Activated B cell treated with CpG ODN at 0.5 μM for 24 hours (primary cell): ENCODE measurements at regions of chr13 and their contacts with region 1.

Region 1: DNA sequence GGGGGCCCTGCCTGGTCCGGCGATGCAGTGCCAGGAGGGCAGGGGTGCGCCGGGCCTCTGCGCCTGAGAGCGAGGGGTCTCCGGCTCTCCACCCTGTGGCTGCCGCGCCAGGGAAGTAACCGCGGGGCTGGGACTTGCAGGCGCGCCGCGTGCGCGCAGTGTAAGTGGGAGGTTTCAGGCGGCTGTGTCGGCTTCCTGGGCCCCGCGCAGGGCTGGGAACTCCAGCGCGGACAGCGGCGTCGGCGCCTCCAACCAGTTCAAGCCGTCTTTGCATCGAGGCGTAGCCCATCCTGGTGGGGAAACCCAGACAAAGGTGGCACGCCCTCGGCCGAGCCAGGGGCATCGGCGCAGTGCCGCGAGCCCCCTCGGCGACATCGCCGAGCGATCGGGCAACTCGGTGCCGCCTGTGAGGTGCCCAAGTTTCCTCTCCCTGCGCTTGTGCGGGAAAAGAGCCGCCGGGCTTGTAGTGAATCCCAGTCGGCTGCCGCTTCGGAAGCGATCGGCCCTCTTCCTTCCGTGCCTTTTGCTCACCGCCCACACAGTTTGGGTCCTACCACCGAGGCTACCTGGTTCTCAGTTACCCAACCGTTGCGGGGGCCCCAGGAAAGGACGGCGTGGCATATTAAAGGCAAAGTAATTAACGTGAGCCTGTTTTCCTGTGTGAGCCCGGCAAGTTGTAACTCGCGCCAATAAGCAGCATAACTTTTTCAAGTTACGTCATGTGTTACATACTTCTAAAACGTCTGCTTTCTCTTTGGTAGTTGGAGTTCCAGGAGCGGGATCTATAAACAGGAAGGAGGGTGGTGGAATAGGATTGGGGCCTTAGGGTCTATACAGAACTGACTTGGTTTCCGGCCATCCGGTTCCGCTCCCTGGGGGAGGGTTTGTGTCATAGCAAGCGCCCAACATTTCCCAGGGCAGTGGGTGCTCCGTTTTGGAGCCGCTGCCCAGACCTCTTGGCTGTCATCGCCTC is 1.2 kb downstream of the LRCH1 start:
- DNase-seq: peak; percentile 72
- ATAC-seq: peak; percentile 57
- H3K4me3 Mint-ChIP-seq: peak overlapping the region; percentile 96
- H3K27ac Mint-ChIP-seq: peak overlapping the region; percentile 94
- H3K4me1 Mint-ChIP-seq: peaks cover 53% of the 10 kb centered on the region
- H3K27me3 Mint-ChIP-seq: no peaks in the 10 kb centered on the region
- CTCF ChIP-seq: no peak

Region 2: DNA sequence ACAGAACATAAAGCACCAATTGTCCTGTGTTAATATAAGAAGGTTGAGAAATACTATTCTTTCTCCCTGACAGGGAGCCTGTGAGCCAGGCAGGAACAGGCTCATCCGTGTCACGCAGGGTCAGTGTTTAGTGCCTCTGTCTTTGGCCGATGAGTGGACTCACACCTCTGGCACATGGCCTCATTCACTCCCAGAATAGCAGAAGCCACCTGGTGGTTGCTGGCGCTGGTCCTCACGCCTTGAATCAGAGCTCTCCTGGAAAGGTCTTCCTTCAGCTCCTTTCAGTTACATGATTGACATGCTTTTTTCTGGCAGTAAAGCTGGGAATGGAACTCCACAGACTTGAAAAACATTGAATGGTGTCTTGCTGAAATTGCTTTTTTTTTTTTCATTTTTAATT is 674.5 kb before region 1 on chr13:
- CTCF ChIA-PET with region 1: no interaction called
- POLR2A ChIA-PET with region 1: no interaction called
- intact Hi-C with region 1: no loop called
- DNase-seq: no peak
- ATAC-seq: no peak
- H3K4me3 Mint-ChIP-seq: no peak overlapping the region
- H3K27ac Mint-ChIP-seq: no peak overlapping the region
- H3K4me1 Mint-ChIP-seq: no peaks in the 10 kb centered on the region
- H3K27me3 Mint-ChIP-seq: peaks cover 5% of the 10 kb centered on the region
- CTCF ChIP-seq: no peak

Region 3: DNA sequence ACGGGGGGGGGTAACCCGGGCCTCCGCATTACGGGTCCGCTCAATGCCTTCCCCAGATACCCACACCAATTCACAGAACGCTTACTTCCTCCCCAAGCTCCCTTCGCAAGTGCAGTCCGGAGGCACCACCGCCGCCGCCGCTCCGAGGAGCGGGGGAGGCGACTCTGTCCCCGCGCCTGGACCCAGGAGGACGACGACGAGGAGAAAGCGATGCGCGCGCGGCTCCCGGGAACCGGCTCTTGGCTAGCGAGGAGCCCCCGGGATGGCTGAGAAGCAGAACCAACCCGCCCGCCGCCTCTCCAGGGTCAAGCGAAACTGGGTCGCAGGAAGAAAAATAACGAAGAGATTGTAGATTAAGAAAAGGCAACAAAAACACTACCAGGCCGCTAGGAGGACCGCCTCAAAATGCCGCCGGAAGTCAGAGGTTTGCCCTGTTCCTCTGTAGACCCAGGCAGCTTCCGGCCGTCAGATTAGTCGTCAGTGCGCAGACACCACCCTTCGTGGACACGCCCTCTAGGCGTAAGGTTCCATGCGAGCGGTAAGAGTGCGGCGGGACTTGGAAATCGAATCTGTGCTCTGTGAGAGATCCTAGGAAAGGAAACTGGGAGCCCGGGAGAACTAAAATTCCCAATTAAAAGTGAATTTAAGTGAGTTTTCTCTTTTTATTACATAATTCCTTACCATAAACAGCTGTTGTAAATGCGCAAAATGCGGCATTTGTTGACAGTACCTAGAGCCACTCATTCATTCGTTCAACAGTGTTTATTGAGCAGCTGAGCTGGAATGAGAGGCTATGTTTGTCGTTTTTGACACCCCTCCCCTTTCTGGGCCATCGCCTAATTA is 501.6 kb before region 1 on chr13 and contains the start of gene ZC3H13:
- CTCF ChIA-PET with region 1: no interaction called
- POLR2A ChIA-PET with region 1: no interaction called
- intact Hi-C with region 1: loop called (anchors 1 kb)
- DNase-seq: peak; percentile 76
- ATAC-seq: peak; percentile 99
- H3K4me3 Mint-ChIP-seq: peak within 1 kb of the TSS; percentile 95
- H3K27ac Mint-ChIP-seq: peak within 1 kb of the TSS; percentile 96
- H3K4me1 Mint-ChIP-seq: peaks cover 39% of the 10 kb centered on the region
- H3K27me3 Mint-ChIP-seq: peaks cover 1% of the 10 kb centered on the region
- CTCF ChIP-seq: no peak
- total RNA-seq, gene ZC3H13: 48.1 and 48.7 TPM in 2 replicates

Region 4: DNA sequence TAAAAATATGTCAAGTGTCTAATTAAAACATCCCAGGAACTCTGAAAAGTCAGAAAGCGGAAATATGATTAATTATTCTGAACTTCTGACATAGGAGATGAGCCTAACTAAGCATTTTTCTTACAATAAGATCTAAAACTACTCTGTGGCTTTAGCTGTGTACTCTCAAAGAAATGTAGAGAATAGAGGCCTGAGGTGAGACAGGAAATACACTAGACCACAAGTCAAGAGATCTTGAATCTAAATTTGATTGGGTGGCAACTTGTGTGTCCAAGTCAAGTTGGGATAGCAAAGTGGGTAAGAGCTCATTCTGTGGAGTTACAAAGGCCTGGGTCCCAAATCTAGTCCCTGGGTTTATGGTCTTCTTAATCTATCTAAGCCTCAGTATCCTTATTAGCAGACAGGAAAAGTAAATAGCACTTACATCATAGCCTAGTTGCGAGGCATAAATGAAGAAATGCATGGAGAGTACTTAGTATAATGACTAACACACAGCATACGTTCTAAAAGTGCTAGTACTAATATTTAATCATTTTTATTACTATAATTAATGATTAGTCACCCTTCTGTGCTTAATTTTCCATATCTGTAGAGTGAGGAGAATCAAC is 351.9 kb before region 1 on chr13:
- CTCF ChIA-PET with region 1: no interaction called
- POLR2A ChIA-PET with region 1: no interaction called
- intact Hi-C with region 1: no loop called
- DNase-seq: no peak
- ATAC-seq: no peak
- H3K4me3 Mint-ChIP-seq: no peak overlapping the region
- H3K27ac Mint-ChIP-seq: no peak overlapping the region
- H3K4me1 Mint-ChIP-seq: peaks cover 25% of the 10 kb centered on the region
- H3K27me3 Mint-ChIP-seq: no peaks in the 10 kb centered on the region
- CTCF ChIP-seq: no peak

Region 5: DNA sequence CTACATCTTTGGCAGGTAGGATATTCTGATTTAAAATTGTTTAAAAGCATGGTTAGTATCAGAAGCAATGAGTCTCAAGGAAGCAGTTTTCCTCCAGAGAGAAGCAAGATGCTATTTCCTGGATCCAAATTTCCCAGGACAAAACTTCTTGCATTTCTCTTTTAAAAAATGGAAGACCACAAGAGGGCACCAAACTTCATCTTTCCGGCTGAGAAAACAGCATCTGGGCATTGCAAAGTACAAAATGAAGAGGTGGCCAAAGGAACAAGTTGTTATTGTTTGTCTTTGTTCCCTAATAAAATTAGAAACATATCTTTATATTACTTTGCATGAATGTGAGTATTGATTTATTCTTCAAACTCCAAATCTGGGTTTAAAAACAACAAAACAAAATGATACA is 61.2 kb before region 1 on chr13:
- CTCF ChIA-PET with region 1: interaction called, 6 read pairs
- POLR2A ChIA-PET with region 1: no interaction called
- intact Hi-C with region 1: loop called (anchors 1 kb)
- DNase-seq: no peak
- ATAC-seq: no peak
- H3K4me3 Mint-ChIP-seq: no peak overlapping the region
- H3K27ac Mint-ChIP-seq: no peak overlapping the region
- H3K4me1 Mint-ChIP-seq: no peaks in the 10 kb centered on the region
- H3K27me3 Mint-ChIP-seq: no peaks in the 10 kb centered on the region
- CTCF ChIP-seq: peak; percentile 65

Region 6: DNA sequence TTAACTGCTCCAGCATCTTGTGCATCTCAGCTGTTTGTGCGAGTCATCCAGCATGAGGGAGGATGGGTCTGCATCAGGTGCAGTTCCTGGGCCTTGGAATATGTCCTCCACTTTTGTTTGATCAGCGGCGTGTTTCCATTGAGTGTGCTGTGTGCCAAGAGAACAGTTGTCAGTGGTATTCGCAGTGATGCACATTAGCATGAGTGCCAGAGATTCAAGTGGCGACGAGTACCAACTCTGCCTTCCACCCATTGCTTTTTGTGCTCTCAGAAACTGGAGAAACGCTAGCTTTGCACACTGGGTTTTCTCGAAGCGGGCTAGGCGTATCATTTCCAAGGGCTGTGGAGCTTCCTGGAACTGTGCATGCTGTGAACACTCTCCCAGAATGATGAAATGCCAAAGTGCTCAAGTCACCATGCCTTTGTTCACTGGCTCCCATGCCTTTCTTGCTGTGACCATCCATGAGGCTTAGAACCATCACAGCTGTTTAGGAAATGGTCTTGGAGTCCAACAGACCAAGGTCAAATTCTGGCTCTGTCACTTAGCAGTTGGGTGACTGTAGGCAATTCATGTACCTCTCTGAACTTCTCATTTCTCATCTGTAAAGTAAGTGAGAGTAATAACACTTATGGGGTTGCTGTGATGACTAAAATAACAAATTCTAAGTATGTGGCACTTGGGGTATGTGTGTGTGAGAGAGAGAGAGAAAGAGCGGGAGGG is 17.2 kb after region 1 on chr13:
- CTCF ChIA-PET with region 1: interaction called, 11 read pairs
- POLR2A ChIA-PET with region 1: interaction called, 9 read pairs
- intact Hi-C with region 1: loop called (anchors 1 kb)
- DNase-seq: no peak
- ATAC-seq: no peak
- H3K4me3 Mint-ChIP-seq: no peak overlapping the region
- H3K27ac Mint-ChIP-seq: peak overlapping the region; percentile 71
- H3K4me1 Mint-ChIP-seq: peaks cover 91% of the 10 kb centered on the region
- H3K27me3 Mint-ChIP-seq: no peaks in the 10 kb centered on the region
- CTCF ChIP-seq: no peak

Region 7: DNA sequence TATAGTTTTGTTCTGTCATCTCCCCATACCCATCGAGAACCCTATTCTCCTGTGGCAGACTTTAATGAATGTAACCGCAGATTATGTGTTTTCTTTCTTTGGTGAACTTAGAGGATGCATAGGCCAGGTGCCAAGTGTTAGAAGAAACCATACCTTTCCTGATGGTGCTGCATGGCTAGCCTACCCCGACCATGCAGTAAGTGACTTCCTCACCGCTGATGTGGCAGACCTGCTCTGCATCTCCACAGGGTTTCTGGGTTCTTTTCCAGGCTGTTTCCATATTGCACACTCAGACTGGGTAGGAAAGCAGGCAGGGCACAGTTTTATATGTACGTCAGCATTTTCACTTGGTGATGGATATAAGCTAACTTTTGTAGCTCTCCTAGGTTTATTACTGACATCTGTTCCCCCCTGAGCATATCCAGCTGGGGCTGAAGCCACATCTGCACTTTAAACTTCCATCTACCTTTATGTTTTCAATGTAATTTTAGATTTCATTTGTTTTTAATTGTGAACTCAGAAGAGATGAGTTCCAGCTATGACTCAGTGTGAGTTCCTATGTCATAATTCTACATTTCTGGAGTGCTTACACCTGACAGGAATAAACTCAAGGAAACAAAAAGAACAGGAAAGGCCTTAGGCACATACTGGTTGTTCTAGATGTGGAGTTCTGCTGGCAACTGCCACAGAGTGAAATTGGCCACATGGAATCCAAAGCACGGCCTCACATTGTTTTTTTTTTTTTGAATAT is 41.1 kb after region 1 on chr13:
- CTCF ChIA-PET with region 1: interaction called, 23 read pairs
- POLR2A ChIA-PET with region 1: interaction called, 45 read pairs
- intact Hi-C with region 1: loop called (anchors 5 kb)
- DNase-seq: no peak
- ATAC-seq: peak; percentile 74
- H3K4me3 Mint-ChIP-seq: peak overlapping the region; percentile 60
- H3K27ac Mint-ChIP-seq: peak overlapping the region; percentile 86
- H3K4me1 Mint-ChIP-seq: peaks cover 95% of the 10 kb centered on the region
- H3K27me3 Mint-ChIP-seq: no peaks in the 10 kb centered on the region
- CTCF ChIP-seq: no peak

Region 8: DNA sequence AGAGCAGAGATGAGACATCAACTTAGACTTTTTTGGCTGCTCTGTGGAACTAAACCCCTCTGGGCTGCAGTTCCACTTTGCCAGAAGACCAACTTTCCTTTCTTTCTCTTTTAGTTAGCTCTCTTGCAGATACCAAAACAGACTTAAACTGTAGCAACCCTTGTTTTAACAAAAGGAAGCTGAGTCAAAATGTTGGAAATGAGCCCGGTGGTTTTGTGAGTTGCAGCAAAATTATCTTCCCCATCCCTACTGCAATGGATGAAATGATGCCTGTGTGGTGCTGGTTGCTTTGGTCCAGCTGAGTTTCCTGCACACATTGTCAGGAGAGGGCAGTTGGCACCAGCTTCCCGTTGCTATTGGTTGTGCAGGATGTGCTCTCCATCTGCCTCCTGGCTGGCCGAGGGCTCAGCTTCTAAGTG is 114.1 kb after region 1 on chr13:
- CTCF ChIA-PET with region 1: interaction called, 16 read pairs
- POLR2A ChIA-PET with region 1: interaction called, 7 read pairs
- intact Hi-C with region 1: loop called (anchors 1 kb)
- DNase-seq: no peak
- ATAC-seq: peak; percentile 32
- H3K4me3 Mint-ChIP-seq: peak overlapping the region; percentile 81
- H3K27ac Mint-ChIP-seq: peak overlapping the region; percentile 86
- H3K4me1 Mint-ChIP-seq: peaks cover 72% of the 10 kb centered on the region
- H3K27me3 Mint-ChIP-seq: no peaks in the 10 kb centered on the region
- CTCF ChIP-seq: no peak

Region 9: GRCh38 chr13:46721054-46721453 is 166.9 kb after region 1 on chr13:
- CTCF ChIA-PET with region 1: interaction called, 168 read pairs
- POLR2A ChIA-PET with region 1: interaction called, 10 read pairs
- intact Hi-C with region 1: loop called (anchors 1 kb)
- DNase-seq: no peak
- ATAC-seq: peak; percentile 49
- H3K4me3 Mint-ChIP-seq: no peak overlapping the region
- H3K27ac Mint-ChIP-seq: no peak overlapping the region
- H3K4me1 Mint-ChIP-seq: peaks cover 8% of the 10 kb centered on the region
- H3K27me3 Mint-ChIP-seq: no peaks in the 10 kb centered on the region
- CTCF ChIP-seq: no peak

Region 10: GRCh38 chr13:47017476-47017875 is 463.3 kb after region 1 on chr13:
- CTCF ChIA-PET with region 1: no interaction called
- POLR2A ChIA-PET with region 1: no interaction called
- intact Hi-C with region 1: no loop called
- DNase-seq: no peak
- ATAC-seq: no peak
- H3K4me3 Mint-ChIP-seq: no peak overlapping the region
- H3K27ac Mint-ChIP-seq: no peak overlapping the region
- H3K4me1 Mint-ChIP-seq: peaks cover 6% of the 10 kb centered on the region
- H3K27me3 Mint-ChIP-seq: no peaks in the 10 kb centered on the region
- CTCF ChIP-seq: no peak

Region 11: DNA sequence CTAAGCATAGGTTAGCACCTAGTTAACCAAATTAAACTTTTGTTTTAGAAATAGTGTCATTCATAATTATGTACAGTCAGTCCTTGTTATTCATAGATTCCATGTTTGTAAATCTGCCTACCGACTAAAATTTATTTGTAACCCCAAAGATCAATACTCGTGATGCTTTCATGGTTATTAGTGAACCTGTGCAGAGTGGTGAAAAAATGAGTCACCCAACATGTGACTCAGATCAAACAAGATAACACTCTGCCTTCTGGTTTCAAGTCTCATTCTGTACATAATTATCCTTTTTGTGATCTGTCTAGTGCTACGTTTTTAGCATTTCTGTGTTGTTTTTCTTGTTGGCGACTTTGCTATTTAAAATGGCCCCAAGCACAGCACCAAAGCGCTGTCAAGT is 1172.2 kb after region 1 on chr13:
- CTCF ChIA-PET with region 1: no interaction called
- POLR2A ChIA-PET with region 1: no interaction called
- intact Hi-C with region 1: no loop called
- DNase-seq: no peak
- ATAC-seq: no peak
- H3K4me3 Mint-ChIP-seq: no peak overlapping the region
- H3K27ac Mint-ChIP-seq: no peak overlapping the region
- H3K4me1 Mint-ChIP-seq: no peaks in the 10 kb centered on the region
- H3K27me3 Mint-ChIP-seq: no peaks in the 10 kb centered on the region
- CTCF ChIP-seq: no peak